ENCODE measurements at regions of chr1 and their contacts with region 1.

Region 1: DNA sequence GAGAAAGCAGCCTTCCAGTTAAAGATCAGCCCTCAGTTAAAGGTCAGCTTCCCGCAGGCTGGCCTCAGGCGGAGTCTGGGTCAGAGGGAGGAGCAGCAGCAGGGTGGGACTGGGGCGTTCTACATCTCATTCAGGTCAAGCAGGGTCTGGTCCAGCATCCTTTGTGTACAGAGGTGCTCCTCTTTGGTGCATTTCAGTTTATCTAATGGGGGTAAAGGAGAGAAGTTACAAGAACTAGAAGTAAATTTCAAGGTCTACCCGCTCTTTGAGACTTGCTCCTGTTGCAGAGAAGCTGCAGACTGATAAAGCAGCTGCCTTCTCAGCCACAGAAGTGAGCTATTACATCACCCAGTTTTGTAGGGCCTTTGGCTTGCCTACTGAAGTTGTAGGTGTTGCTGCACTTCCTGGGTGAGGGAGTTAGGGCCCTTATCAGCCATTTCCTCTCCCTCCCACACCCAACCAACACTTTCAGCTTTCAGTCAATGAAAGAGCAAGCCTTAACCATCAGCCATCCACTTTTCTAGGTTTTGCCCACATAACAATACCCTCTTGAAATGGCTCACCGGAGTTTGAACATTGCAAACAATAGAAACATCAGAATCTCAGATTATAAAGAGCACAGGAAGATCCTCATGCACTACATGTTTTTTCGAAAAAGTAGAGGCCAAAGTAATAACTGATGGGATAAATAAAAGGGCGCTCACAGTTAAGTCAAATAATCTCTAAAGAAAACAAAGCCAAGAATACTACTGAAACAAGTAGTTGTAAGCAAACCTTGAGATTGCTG is 2.8 kb upstream of the NUP210L start:
- DNase-seq: peak; percentile 49 to 85 (median 81)
- H3K4me3 ChIP-seq: peak overlapping the region; percentile 4
- H3K4me3 Mint-ChIP-seq: peak overlapping the region; percentile 16 to 86 (median 67)
- H3K27ac ChIP-seq: peak overlapping the region; percentile 56
- H3K27ac Mint-ChIP-seq: peak overlapping the region; percentile 82 to 98 (median 94)
- H3K4me1 ChIP-seq: peaks cover 73% of the 10 kb centered on the region
- H3K4me1 Mint-ChIP-seq: peaks cover 44 to 71% (median 62%) of the 10 kb centered on the region in 3 donors
- H3K27me3 ChIP-seq: no peaks in the 10 kb centered on the region
- H3K27me3 Mint-ChIP-seq: peaks cover 0 to under 1% of the 10 kb centered on the region in 2 donors

Region 2: DNA sequence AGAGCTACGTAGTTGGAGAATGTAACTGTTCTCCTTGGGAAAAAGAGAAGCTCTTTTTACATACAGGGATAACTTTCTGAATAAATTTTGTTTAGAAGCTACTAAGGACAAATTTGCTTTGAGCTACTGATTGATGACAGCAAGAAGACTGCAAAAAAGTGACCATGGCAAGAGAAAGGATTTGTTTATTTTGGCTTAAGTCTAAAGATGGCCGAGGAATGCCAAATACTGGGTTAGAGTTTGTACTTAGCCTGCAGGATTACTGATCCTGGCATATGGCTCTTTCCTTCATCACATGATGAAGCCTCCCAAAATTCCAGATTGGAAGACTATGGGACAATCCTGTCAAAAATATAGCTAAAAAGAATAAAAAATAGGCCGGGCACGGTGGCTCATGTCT is 138.4 kb before region 1 on chr1:
- CTCF ChIA-PET with region 1: no interaction called
- POLR2A ChIA-PET with region 1: no interaction called
- DNase-seq: no peak
- H3K4me3 ChIP-seq: no peak overlapping the region
- H3K4me3 Mint-ChIP-seq: no peak overlapping the region
- H3K27ac ChIP-seq: no peak overlapping the region
- H3K27ac Mint-ChIP-seq: no peak overlapping the region
- H3K4me1 ChIP-seq: no peaks in the 10 kb centered on the region
- H3K4me1 Mint-ChIP-seq: no peaks in the 10 kb centered on the region
- H3K27me3 ChIP-seq: no peaks in the 10 kb centered on the region
- H3K27me3 Mint-ChIP-seq: no peaks in the 10 kb centered on the region

Region 3: DNA sequence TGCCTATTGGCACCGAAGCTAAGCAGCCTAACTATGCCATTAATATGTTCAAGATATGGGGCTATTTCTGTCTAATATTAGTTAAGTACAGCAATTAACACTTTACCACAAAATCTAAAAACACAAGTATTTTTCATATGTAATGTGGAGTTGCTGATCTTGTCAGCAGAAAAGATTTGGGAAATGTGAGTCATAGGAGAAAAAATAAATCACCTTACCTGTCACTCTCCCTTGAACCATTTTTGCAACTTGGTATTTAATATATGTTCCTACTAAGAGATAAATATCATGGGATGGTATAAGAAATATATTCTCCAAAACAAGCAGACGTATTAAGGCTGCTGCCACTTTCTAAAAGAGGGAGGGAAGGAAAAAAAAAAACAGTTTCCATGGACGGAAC is 19.8 kb before region 1 on chr1:
- CTCF ChIA-PET with region 1: no interaction called
- POLR2A ChIA-PET with region 1: no interaction called
- DNase-seq: no peak
- H3K4me3 ChIP-seq: no peak overlapping the region
- H3K4me3 Mint-ChIP-seq: no peak overlapping the region
- H3K27ac ChIP-seq: no peak overlapping the region
- H3K27ac Mint-ChIP-seq: no peak overlapping the region
- H3K4me1 ChIP-seq: no peaks in the 10 kb centered on the region
- H3K4me1 Mint-ChIP-seq: no peaks in the 10 kb centered on the region
- H3K27me3 ChIP-seq: no peaks in the 10 kb centered on the region
- H3K27me3 Mint-ChIP-seq: no peaks in the 10 kb centered on the region

Region 4: DNA sequence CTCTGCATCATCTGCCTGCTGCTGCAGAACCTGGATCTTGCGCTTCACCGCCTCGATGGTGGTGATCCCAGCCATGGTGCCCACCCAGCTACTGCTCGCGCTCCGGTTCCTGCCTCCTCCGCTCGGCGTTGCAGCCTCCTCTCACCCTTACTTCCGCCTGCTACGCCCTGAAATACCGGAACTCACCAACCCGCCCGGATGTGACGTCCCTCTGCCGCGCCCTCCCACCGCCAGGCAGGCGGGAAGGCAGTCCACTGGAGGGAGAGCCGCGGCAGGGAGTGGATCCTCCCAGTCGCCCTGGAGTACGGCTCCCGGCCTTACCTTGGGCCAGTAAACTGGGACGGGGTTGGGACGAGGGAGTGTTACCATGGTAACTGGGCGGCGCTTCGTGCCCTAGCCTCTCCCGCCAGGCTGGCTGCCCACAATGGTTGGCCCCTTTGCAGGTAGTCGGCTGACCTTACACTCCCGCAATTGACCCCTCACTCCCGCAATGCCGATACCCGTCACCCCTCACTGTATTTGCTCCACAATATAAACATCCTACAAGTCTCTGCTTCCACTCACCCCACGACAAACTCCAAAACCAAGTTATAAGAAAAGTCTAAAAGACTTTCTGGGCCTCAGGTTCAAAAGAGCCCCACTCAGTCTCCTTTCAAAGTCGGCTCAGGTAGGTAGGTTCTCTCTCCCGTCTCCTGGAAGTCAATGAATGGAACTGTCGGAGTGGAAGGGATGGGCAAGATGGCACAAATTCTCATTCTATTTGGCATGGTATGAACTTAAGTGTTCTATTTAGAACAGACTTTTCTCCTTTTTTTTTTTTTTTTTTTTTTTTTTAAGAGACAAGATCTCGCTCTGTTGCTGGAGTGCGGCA is 25.6 kb after region 1 on chr1:
- CTCF ChIA-PET with region 1: interaction called, 5 read pairs
- POLR2A ChIA-PET with region 1: interaction called, 10 read pairs
- DNase-seq: peak; percentile 90 to 95 (median 93)
- H3K4me3 ChIP-seq: peak overlapping the region; percentile 85
- H3K4me3 Mint-ChIP-seq: peak overlapping the region; percentile 100
- H3K27ac ChIP-seq: peak overlapping the region; percentile 92
- H3K27ac Mint-ChIP-seq: peak overlapping the region; percentile 94 to 100 (median 100)
- H3K4me1 ChIP-seq: peaks cover 43% of the 10 kb centered on the region
- H3K4me1 Mint-ChIP-seq: peaks cover 41 to 51% (median 49%) of the 10 kb centered on the region in 3 donors
- H3K27me3 ChIP-seq: no peaks in the 10 kb centered on the region
- H3K27me3 Mint-ChIP-seq: peaks cover 0 to 7% of the 10 kb centered on the region in 2 donors

Region 5: DNA sequence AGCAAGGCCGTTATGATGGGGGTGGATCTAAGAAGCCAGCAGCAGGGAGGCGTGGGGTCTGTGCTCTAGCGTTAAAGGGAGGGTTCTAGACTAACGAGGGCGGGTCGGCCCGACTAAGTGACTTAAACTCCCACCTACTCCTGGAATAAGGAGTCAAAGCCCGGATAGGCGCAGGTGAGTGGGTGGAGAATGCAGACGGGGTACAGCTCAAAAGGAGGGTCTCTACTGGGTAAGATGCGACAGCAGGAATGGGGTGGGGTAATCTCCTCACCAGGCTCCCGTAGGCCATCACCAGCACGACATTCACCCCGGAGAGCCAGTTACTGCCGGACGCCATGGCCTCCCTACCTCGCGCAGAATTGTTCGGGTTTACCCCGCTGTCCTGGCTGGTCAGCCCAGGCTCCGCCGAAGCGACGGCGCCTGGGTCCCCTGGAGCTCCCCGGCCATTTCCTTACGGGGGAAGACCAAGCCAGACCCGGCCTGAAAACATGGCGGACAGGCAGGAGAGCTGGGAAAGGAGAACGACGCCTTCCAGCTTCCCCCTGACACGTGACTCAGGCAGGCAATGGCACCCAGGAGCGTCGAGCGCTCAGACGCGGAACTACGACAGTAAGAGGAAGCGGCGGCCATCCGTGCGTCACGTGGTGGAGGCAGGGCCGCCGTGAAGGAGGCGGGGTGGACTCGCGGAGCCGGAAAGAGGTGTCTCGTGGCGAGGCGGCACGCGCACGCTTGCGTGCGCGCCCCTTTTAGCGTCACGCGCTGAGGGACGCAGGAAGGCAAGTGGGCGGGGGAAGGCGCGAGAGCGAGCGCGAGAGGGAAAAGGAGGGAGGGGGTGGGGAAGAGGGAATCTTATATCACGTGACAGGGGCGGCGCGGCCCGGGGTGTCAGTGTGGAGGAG is 62.6 kb after region 1 on chr1 and contains the start of gene UBAP2L:
- CTCF ChIA-PET with region 1: no interaction called
- POLR2A ChIA-PET with region 1: interaction called, 10 read pairs
- DNase-seq: peak; percentile 98 to 99 (median 99)
- H3K4me3 ChIP-seq: peak within 1 kb of the TSS; percentile 91
- H3K4me3 Mint-ChIP-seq: peak within 1 kb of the TSS; percentile 88 to 99 (median 98)
- H3K27ac ChIP-seq: peak within 1 kb of the TSS; percentile 98
- H3K27ac Mint-ChIP-seq: peak within 1 kb of the TSS; percentile 89 to 100 (median 100)
- H3K4me1 ChIP-seq: peaks cover 53% of the 10 kb centered on the region
- H3K4me1 Mint-ChIP-seq: peaks cover 66 to 80% (median 75%) of the 10 kb centered on the region in 3 donors
- H3K27me3 ChIP-seq: no peaks in the 10 kb centered on the region
- H3K27me3 Mint-ChIP-seq: no peaks in the 10 kb centered on the region
- total RNA-seq, gene UBAP2L: 258 to 277 TPM

Region 6: DNA sequence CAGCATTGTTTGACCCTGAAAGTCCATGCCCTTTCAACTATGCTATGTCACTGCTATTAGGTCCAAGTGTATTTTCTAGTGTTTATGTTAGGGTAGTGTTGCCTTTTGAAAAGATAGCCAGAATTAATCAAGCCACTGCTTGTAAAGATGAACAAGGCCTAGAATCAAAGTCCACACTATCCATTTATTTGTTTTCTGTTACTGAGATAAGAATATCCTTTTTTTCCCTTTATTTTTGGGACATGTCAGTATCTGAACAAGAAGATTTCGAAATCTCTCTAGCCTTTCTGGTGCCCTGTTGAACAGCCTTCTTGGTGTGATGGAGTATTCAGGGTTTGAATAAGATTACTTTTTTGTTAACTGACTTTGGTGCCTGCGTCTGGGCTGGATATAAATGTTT is 79.7 kb after region 1 on chr1:
- CTCF ChIA-PET with region 1: no interaction called
- POLR2A ChIA-PET with region 1: no interaction called
- DNase-seq: no peak
- H3K4me3 ChIP-seq: no peak overlapping the region
- H3K4me3 Mint-ChIP-seq: no peak overlapping the region
- H3K27ac ChIP-seq: no peak overlapping the region
- H3K27ac Mint-ChIP-seq: no peak overlapping the region
- H3K4me1 ChIP-seq: peaks cover 11% of the 10 kb centered on the region
- H3K4me1 Mint-ChIP-seq: peaks cover 29 to 53% (median 47%) of the 10 kb centered on the region in 3 donors
- H3K27me3 ChIP-seq: no peaks in the 10 kb centered on the region
- H3K27me3 Mint-ChIP-seq: no peaks in the 10 kb centered on the region

Measured in CD8-positive, alpha-beta memory T cell (primary cell).